HEK293T (cell line): ENCODE measurements at regions of chr6 and their contacts with region 1.

Region 1: GRCh38 chr6:30013291-30013922 is 47.7 kb upstream of the POLR1H start:
- DNase-seq: peak; percentile 49

Region 2: DNA sequence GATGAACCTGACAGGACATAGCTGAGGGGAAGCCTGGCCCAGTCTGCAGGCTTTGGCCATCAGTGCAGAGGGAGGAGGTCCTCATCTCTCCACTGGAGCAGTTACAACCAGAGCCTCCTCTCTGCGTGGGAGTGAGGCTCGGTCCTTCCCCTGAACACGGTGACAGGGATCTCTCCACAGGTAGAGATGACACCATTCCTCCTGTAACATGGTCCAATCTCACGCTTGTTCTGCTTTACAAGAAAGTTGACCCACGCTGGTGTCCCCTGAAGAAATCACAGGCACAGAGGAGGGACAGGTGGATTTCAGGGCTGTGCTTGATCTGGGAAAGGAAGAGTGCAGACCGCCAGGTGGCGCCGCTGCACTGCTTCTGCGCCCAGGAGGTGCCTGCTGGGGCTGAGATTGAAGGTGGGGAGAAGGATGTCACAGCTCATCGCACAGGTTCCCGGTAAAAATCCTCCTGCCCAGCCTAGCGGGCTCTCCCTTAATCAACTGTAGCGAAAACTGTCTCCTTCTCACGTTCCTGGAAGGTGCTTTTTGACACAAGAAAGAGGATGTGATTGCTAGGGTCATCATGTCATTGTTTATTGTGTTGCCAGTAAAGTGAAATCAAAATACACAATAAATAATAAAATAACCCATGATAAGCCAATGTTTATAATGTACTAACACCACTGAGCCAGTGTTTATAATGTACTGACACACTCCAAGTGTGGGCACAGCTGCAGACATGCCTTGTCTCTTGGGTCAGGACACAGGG is 165.4 kb before region 1 on chr6:
- CTCF ChIA-PET with region 1: interaction called, 10 read pairs
- POLR2A ChIA-PET with region 1: no interaction called
- DNase-seq: peak; percentile 83

Region 3: DNA sequence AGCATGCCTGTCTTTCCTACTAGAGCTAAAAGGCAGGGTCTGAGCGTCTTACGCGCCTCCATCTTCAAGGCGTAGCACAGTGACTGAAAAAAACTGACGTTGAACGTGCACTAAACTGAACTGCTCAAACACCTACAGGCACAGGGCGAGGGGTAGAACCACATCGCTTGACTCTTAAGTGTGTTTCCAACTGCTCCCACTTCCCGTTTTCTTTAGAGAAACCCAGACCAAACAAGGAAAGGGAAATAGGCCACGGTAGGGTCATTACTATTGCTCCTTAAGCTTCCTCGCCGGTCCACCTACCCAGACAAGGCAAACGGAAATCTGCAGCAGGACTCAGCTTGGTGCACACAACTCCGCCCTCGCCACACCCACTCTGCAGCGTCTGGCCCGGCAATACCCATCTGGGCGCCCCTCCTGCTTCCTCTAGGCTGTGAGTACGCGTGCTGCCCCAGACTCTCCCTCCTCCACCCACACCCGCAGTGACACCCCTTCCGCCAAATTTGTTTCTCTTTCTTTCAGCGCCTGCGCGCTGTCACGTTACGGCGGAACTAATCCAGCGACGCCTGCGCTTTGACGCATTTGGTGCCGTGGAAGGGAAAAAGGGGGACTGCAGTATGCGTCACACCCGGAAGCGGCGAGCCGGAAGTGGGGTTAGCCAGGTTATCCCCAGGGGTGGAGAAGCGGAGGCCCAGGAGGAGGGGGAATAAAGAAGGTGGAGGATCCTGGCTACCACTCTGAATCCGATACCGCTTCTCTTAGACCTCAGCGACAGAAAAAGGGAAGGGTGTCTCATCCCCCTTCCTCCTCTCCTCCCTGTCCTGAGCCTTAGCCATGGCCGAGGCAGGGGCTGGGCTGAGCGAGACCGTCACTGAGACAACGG is 53.4 kb after region 1 on chr6 and contains the start of gene PPP1R11:
- CTCF ChIA-PET with region 1: no interaction called
- POLR2A ChIA-PET with region 1: no interaction called
- DNase-seq: peak; percentile 91